Posterior cingulate gyrus (tissue), 11 donors: ENCODE measurements at regions of chr18 and their contacts with region 1.

Region 1: GRCh38 chr18:58768293-58768974 is 96.2 kb upstream of the ZNF532 start:
- DNase-seq: peak; percentile 68 to 97 (median 82)

Region 2: DNA sequence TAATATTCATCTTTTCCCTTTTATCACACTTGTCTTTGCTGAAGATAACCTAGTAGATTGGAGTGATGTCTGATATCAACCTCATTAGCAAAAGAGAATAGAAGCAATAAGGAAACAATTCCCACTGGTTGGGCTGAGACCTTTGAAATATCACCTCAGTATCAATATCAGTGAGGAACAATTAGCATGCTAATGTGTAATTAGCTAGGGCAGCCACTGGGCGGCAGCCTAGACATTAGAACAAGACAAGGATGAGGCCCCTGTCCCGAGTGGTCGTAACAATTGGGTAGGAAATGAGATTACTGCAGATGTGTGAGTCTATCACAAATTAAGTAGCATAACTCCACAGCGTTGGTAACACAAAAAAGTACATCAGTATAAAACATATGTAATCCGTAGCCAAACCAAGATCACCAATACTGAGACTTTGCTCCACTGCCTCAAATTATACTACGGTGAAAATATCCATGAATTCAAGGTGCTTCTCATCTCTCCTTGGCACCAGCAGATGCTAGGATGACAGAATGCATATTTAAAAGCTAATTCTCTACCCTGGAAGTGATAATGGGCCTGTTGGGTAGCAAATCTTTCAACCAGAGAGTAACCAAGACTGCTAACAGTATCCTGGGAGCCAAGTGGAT is 238.6 kb before region 1 on chr18:
- intact Hi-C with region 1: loop called (anchors 2 kb)
- DNase-seq: peak in 4 of 10 donors; percentile 22 to 40 (median 34)

Region 3: GRCh38 chr18:58800582-58800981 is 32.1 kb after region 1 on chr18:
- intact Hi-C with region 1: no loop called
- DNase-seq: peak in 1 of 10 donors; percentile 24

Region 4: DNA sequence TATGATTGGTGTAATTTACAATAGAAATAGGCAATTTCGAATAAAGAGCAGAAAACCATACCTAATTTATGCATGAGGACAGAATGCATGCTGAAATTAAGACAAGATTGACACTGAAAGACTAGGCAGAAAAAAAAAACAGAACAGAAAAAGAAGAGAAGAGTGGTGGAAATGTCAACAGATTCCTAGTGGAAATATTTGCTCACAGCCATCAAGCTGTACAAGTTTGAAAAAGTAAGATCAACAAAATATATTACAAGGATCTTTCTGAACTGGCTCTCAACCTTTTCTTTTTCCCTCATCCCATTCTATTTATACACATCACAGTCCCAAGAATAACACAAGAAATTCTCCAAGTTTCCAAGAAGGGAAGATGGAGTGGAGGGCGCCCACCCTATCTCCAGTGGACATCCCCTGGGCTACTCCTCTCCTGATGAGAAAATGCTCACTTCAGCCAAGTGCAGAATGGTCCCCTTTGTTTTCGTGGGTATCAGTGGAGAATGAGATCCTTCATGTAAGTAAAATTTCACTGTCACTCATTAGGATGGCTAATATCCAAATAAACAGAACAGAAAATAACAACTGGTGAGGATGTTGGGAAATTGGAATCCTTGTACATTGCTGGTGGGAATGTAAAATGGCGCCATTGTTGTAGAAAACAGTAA is 45.3 kb after region 1 on chr18:
- intact Hi-C with region 1: no loop called
- DNase-seq: peak in 2 of 10 donors; percentile 10 to 25

Region 5: GRCh38 chr18:58831606-58832005 is 63.2 kb after region 1 on chr18:
- intact Hi-C with region 1: no loop called
- DNase-seq: no peak

Region 6: GRCh38 chr18:59070181-59070912 is 301.9 kb after region 1 on chr18:
- intact Hi-C with region 1: loop called (anchors 1 kb)
- DNase-seq: peak; percentile 79 to 98 (median 91)